Activated CD4-positive, alpha-beta T cell treated with anti-CD3 and anti-CD28 coated beads for 36 hours (primary cell): ENCODE measurements at regions of chr9 and their contacts with region 1.

Region 1: DNA sequence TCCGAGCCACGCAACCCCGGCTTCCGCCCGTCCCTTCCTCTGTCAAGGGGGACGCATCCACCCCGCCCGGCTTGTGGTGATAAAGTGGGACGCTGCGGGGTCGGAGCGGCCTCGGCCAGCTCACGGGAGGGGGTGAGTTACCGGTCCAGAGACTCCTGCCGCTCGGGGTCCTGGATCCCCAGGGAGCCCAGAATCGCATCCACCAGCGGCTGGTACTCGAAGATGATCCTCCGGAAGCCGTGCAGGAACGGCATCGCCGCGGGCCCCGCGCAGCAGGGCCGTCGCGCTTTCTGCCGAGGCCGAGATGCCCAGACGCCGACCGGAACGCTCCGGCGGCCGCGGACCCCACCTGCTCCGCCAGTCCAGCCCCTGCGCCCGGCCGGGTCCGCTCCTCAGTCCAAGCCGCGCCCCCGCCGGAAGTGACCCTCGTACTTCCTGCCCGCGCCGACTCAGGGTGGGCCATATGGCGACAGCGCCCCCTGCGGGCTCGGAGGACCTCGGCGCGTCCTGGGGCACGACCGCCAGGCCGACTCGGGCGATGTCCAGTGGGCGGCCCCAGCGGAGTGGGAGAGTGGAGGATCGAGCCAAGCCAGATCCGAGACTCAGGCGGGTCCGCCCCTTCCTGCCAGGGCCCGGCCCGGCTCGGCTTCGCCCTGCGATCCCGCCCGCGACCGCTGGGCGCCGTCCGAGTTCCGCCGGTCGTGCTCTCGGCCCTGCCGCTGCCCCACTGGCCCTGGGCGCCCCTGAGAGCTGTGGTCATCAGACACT is at the start of gene ASB6:
- DNase-seq: peak; percentile 97
- ATAC-seq: peak; percentile 97
- H3K4me3 Mint-ChIP-seq: peak within 1 kb of the TSS; percentile 87
- H3K27ac Mint-ChIP-seq: peak within 1 kb of the TSS; percentile 73
- H3K4me1 Mint-ChIP-seq: peaks cover 18% of the 10 kb centered on the region
- H3K27me3 Mint-ChIP-seq: no peaks in the 10 kb centered on the region
- total RNA-seq, gene ASB6: 13.4 to 15.0 TPM

Region 2: DNA sequence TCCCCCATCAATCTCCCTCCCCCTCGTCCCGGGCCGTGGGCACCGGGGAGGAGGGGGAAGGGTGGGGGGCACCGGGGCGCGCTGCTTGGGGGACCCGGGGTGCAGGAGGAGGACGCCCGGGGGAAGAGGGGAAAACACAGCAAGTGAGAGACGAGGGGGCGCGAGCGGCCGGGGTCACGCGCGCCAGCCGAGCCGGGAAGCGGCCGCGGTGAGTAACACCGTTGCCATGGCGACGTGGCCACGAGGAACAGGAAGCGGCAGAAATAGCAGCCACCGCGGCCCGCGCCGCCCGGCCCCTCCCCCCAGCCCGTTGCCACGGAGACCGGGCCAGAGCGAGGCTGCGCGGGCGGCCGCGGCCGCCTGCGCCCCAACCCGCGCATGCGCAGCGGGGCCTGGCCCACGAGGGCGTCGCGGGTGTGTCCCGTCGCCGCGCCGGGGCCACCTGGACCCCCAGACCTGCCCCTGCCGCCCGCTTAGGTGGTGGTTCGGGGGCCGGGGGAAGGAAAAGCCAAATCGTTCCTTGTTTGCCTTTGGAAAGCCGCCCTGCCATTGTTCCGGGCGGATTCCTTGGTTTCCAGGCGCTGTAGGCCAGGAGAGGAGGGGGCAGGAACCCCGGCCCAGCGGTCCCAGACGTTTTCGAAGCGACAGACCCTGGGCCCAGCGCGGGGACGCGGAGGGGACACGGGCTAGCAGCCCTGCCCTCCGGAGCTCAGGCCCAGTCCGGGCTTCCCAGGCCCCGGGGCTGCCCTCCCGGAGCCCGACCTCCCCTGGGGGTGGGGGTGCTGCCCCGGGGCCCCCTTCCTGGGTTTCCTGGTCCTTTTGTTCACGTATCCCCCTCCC is 228.2 kb before region 1 on chr9:
- CTCF ChIA-PET with region 1: interaction called, 3 read pairs
- POLR2A ChIA-PET with region 1: no interaction called
- intact Hi-C with region 1: loop called in 1 of 2 experiments (anchors 1 kb)
- DNase-seq: peak; percentile 99
- ATAC-seq: peak; percentile 89
- H3K4me3 Mint-ChIP-seq: peak overlapping the region; percentile 75
- H3K27ac Mint-ChIP-seq: peak overlapping the region; percentile 94
- H3K4me1 Mint-ChIP-seq: peaks cover 23% of the 10 kb centered on the region
- H3K27me3 Mint-ChIP-seq: no peaks in the 10 kb centered on the region

Region 3: GRCh38 chr9:129569502-129570449 is 72.2 kb before region 1 on chr9:
- CTCF ChIA-PET with region 1: no interaction called
- POLR2A ChIA-PET with region 1: no interaction called
- intact Hi-C with region 1: no loop called
- DNase-seq: no peak
- ATAC-seq: no peak
- H3K4me3 Mint-ChIP-seq: peak overlapping the region; percentile 52
- H3K27ac Mint-ChIP-seq: no peak overlapping the region
- H3K4me1 Mint-ChIP-seq: peaks cover 23% of the 10 kb centered on the region
- H3K27me3 Mint-ChIP-seq: peaks cover 23% of the 10 kb centered on the region

Region 4: DNA sequence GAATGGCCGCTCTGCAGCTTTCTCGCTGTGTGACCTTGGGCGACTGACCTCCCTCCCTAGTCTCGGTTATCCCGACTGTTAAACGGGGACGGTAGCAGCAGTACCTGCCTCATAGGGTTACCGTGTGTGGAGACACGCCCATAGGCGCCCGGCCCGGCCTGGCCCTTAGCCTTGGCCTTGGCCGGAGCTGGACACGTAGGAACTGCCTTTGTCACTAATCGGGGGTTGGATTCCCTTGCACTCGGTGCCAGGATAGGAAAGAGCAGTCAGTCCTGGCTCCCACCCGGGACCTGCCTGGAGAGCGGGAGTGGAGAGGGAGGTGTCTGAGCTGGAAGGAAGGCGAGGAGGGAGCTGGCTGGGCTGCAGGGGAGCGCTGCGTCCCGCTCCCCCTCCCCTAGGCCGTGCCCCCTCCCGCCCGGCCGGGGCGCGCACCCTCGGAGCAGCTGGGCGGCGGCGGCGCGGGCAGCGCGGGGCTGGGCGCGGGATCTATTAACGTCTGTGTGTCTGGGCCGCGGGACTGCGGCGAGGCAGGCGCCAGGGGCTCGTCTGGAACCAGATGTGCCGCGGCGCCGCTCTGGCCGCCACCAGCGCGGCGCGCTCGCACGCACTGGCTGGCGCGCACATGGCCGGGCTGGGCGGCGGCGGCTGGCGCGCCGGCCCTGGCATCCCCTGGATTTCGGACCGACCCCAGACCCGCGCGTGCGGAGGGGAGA is 55.2 kb after region 1 on chr9:
- CTCF ChIA-PET with region 1: no interaction called
- POLR2A ChIA-PET with region 1: no interaction called
- intact Hi-C with region 1: loop called in 1 of 2 experiments (anchors 1 kb)
- DNase-seq: peak; percentile 51
- ATAC-seq: peak; percentile 59
- H3K4me3 Mint-ChIP-seq: peak overlapping the region; percentile 62
- H3K27ac Mint-ChIP-seq: peak overlapping the region; percentile 86
- H3K4me1 Mint-ChIP-seq: peaks cover 10% of the 10 kb centered on the region
- H3K27me3 Mint-ChIP-seq: peaks cover 28% of the 10 kb centered on the region

Region 5: DNA sequence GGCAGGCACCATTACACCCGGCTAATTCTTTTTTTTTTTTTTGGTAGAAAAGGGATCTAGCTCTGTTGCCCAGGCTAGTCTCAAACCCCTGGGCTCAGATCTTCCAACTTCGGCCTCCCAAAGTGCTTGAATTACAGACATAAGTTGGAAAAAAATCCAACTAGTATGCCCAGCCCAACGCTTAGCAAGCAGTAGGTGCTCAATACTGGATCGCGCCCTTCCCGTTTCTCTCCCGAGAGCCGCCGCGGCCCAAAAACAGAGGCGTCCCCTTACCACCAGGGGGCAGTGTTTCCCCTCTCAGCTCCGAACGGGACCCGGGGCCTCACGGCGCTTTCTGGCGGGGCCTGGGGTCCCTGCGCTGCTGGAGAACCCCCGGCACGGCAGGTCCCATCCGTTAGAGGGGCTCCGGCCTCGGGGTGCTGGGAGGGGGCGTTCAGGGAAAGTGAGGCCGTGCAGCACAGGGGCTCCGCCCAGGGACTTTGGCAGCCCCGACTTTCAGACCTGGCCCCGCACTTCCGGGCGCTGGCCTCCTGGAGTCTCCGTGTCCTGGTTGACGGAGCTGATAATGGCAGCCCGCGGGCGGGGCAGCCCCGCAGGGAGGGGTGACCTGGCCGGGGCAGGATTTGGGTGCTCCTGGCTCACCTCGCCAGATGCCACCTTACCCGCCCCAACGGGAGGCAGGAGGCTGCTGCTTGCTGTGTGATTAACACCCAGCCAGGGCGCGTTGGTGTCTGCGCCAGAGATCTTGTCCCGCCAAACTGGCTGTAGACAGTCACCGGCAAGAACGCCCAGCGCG is 95.7 kb after region 1 on chr9:
- CTCF ChIA-PET with region 1: interaction called, 3 read pairs
- POLR2A ChIA-PET with region 1: no interaction called
- intact Hi-C with region 1: loop called in 1 of 2 experiments (anchors 1 kb)
- DNase-seq: peak; percentile 93
- ATAC-seq: peak; percentile 89
- H3K4me3 Mint-ChIP-seq: peak overlapping the region; percentile 55
- H3K27ac Mint-ChIP-seq: no peak overlapping the region
- H3K4me1 Mint-ChIP-seq: peaks cover 6% of the 10 kb centered on the region
- H3K27me3 Mint-ChIP-seq: no peaks in the 10 kb centered on the region

Region 6: DNA sequence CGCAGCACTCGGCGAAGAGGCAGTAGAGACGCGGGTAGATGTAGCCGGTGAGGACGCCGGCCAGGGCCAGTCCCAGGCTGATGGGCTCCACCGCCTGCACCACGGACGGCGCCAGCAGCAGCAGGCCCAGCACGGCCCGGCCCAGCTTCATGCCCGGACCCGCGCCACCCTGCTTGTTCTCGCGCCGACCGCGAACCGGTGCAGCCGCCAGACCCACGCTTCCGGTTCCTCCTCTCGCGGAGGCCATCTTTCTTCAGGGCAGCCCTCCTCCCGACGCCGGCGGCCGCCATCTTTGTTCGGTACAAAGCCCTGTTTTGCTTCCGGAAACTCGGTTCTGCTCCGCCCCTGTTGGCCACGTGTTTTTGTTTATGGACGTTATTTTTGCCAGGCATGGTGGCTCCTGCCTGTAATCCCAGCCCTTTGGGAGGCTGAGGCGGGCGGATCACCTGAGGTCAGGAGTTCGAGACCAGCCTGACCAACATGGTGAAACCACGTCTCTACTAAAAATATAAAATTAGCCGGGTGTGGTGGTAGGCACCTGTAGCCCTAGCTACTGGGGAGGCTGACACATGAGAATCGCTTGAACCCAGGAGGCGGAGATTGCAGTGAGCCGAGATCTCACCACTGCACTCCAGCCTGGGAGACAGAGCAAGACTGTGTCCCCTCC is 182.1 kb after region 1 on chr9 and contains the start of gene TOR1A:
- CTCF ChIA-PET with region 1: no interaction called
- POLR2A ChIA-PET with region 1: no interaction called
- intact Hi-C with region 1: loop called in 1 of 2 experiments (anchors 1 kb)
- DNase-seq: peak; percentile 97
- ATAC-seq: peak; percentile 93
- H3K4me3 Mint-ChIP-seq: peak within 1 kb of the TSS; percentile 82
- H3K27ac Mint-ChIP-seq: peak within 1 kb of the TSS; percentile 63
- H3K4me1 Mint-ChIP-seq: peaks cover 14% of the 10 kb centered on the region
- H3K27me3 Mint-ChIP-seq: no peaks in the 10 kb centered on the region
- total RNA-seq, gene TOR1A: 34.9 to 39.7 TPM